Dendritic cell treated with granulocyte-macrophage colony-stimulating factor and Interleukin-4, amounts not matched to agents 40 ng/mL and 50 ng/mL, for 4 days (primary cell): ENCODE measurements at regions of chr18 and their contacts with region 1.

Region 1: DNA sequence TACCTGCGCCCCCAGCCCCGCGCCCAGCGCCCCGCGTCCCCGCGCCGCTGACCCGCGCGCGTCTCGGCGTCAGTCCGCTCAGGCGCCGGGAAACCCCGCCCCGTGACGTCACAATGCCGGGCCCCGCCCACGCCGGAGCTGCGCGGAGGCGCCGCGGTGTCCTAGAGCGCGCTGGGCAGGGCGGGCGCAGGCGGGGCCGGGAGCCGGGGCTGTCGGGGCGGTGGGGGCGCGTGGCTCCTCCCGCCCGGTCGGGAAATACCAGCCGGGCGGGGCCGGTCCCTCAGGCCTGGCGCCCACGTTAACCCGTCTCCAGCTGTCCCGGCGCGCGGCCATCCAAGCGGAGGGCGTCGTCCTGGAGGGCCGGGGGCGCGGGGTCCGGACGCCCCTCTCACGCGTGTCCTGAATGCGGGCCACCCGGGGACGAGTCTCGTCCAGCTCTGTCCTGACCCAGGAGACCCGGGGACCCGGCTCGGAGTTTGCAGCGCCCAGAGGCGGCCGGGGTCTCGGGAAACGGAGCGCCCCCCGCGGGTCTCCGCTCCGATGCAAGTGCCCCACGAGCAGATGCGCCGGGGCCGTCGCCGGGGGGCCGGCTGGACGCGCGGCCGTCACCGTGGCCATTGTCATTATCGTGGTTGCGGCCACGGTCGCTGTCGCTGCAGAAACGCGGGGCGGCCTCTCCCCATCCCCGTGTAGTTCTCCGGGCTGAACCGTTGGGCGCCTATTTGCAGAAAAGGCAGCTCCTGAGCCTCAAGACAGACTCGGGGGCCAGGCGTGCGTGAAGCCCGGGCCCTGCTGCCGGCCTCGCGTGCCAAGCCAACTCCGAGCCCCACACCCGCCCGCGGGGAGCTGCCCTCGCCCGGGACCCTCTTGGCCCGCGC is at the start of gene SLC66A2:
- H3K4me3 Mint-ChIP-seq: peak within 1 kb of the TSS; percentile 91
- H3K27ac Mint-ChIP-seq: peak within 1 kb of the TSS; percentile 90
- H3K4me1 Mint-ChIP-seq: peaks cover 62% of the 10 kb centered on the region
- H3K27me3 Mint-ChIP-seq: peaks cover 4% of the 10 kb centered on the region

Region 2: GRCh38 chr18:79476918-79477571 is 474.8 kb before region 1 on chr18:
- intact Hi-C with region 1: no loop called
- H3K4me3 Mint-ChIP-seq: no peak overlapping the region
- H3K27ac Mint-ChIP-seq: no peak overlapping the region
- H3K4me1 Mint-ChIP-seq: no peaks in the 10 kb centered on the region
- H3K27me3 Mint-ChIP-seq: no peaks in the 10 kb centered on the region

Region 3: DNA sequence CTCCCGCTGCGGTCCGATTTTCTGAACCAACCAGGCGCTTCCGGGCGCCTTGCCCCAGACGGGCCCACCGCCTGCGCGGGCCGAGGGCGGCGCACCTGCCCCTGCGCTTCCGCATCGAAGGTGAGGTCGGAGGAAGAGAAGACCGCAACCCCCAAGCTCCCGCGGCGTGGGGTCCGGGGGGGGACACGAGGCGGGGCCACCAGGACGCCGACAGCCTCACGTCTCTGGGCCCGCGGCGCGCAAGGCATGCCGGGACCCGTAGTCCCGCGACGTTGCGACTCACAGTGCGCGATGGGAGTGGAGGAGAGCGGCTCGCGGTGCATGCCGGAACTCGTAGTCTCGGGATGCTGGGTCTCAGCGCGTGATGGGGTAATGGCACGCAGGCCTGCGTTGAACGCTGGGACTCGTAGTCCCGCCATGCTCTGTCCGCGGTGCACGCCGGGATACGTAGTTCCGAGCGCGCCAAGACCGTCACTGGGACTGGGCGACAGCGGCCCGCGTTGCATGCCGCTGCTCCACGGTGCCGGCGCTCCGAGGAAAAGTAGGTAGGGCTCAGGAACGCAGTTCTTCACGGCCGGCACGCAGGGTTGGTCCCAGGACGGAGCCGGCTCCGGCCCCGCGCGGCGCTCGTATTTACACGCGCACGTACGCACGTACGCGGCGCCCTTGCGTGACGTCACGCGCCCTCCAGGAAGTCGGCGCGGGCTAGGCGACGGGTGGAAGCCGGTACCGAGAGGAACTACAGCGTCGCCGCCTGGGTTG is 272.5 kb before region 1 on chr18 and contains the start of gene CTDP1:
- intact Hi-C with region 1: loop called (anchors 1 kb)
- H3K4me3 Mint-ChIP-seq: peak within 1 kb of the TSS; percentile 90
- H3K27ac Mint-ChIP-seq: peak within 1 kb of the TSS; percentile 97
- H3K4me1 Mint-ChIP-seq: peaks cover 46% of the 10 kb centered on the region
- H3K27me3 Mint-ChIP-seq: no peaks in the 10 kb centered on the region

Region 4: GRCh38 chr18:79790996-79791972 is 160.5 kb before region 1 on chr18:
- intact Hi-C with region 1: loop called (anchors 10 kb)
- H3K4me3 Mint-ChIP-seq: peak overlapping the region; percentile 21
- H3K27ac Mint-ChIP-seq: peak overlapping the region; percentile 70
- H3K4me1 Mint-ChIP-seq: peaks cover 65% of the 10 kb centered on the region
- H3K27me3 Mint-ChIP-seq: peaks cover 76% of the 10 kb centered on the region

Region 5: DNA sequence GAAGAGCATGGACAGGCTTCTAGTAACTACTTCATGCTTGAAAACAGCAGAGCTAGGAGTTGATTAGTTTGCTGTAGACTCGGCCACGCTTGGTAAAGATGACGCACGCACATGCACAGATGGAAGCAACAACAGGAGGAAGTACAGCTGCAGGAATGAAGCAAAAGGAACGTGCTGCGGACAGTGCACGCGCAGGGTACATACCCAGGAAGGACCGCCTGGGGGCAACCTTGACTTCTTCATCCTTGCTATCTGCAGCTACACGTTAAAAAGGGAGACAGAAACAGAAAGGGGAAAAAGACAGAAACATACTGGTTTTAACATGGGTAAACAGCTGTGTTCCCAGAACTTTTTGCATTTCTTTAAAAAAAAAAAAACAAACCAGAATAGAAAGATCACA is 18.1 kb before region 1 on chr18:
- intact Hi-C with region 1: loop called (anchors 2 kb)
- H3K4me3 Mint-ChIP-seq: peak overlapping the region; percentile 56
- H3K27ac Mint-ChIP-seq: peak overlapping the region; percentile 86
- H3K4me1 Mint-ChIP-seq: peaks cover 70% of the 10 kb centered on the region
- H3K27me3 Mint-ChIP-seq: no peaks in the 10 kb centered on the region

Region 6: GRCh38 chr18:80034068-80034851 is 82.4 kb after region 1 on chr18 and contains the start of gene RBFA:
- intact Hi-C with region 1: loop called (anchors 1 kb)
- H3K4me3 Mint-ChIP-seq: peak within 1 kb of the TSS; percentile 82
- H3K27ac Mint-ChIP-seq: peak within 1 kb of the TSS; percentile 95
- H3K4me1 Mint-ChIP-seq: peaks cover 27% of the 10 kb centered on the region
- H3K27me3 Mint-ChIP-seq: peaks cover 1% of the 10 kb centered on the region

Region 7: DNA sequence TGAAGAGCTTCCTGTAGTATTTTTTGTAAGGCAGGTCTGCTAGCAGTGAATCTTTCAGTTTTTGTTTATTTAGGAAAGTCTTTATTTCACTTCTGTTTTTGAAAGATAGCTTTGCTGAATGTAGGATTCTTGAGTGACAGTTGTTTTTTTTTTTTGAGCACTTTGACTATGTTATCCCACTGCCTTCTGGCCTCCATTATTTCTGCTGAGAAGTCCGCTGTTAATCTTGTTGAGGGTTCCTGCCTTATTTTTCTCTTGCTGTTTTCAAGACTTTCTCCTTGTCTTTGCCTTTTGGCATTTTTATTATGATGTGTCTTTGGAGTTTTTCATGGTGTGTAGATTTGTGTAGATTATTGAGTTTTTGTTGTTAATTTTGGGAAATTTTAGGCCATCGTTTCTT is 104.3 kb after region 1 on chr18:
- intact Hi-C with region 1: no loop called
- H3K4me3 Mint-ChIP-seq: no peak overlapping the region
- H3K27ac Mint-ChIP-seq: no peak overlapping the region
- H3K4me1 Mint-ChIP-seq: no peaks in the 10 kb centered on the region
- H3K27me3 Mint-ChIP-seq: no peaks in the 10 kb centered on the region

Region 8: DNA sequence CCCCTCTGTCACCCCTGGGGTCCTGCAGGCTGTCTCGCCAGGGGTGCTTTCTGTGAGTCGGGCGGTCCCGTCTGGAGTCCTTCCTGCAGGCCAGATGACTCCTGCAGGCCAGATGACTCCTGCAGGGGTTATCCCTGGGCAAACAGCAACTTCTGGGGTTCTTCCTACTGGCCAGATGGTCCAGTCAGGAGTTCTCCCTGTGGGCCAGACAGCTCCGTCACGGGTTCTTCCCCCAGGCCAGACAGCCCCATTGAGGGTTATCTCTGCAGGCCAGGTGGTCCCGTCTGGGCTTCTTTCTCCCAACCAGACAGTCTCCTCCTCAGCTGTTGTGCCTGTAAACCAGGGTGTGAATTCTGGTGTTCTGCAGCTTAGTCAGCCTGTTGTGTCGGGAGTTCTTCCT is 184.9 kb after region 1 on chr18:
- intact Hi-C with region 1: no loop called
- H3K4me3 Mint-ChIP-seq: no peak overlapping the region
- H3K27ac Mint-ChIP-seq: no peak overlapping the region
- H3K4me1 Mint-ChIP-seq: no peaks in the 10 kb centered on the region
- H3K27me3 Mint-ChIP-seq: no peaks in the 10 kb centered on the region

Region 9: GRCh38 chr18:80229363-80230127 is 277.7 kb after region 1 on chr18:
- intact Hi-C with region 1: no loop called
- H3K4me3 Mint-ChIP-seq: no peak overlapping the region
- H3K27ac Mint-ChIP-seq: no peak overlapping the region
- H3K4me1 Mint-ChIP-seq: no peaks in the 10 kb centered on the region
- H3K27me3 Mint-ChIP-seq: no peaks in the 10 kb centered on the region